Heart right ventricle (tissue), 16 donors: ENCODE measurements at regions of chr2 and their contacts with region 1.

Region 1: GRCh38 chr2:120312861-120313694 is 32.9 kb upstream of the INHBB start:
- DNase-seq: peak; percentile 81 to 86
- ATAC-seq: peak; percentile 68 to 92 (median 86)
- H3K4me3 ChIP-seq: peak overlapping the region; percentile 4 to 55 (median 46)
- H3K27ac ChIP-seq: peak overlapping the region in 3 of 10 donors; percentile 0 to 34 (median 25)
- H3K4me1 ChIP-seq: peaks cover 0 to 29% (median 17%) of the 10 kb centered on the region in 9 donors
- H3K27me3 ChIP-seq: no peaks in the 10 kb centered on the region
- CTCF ChIP-seq: peak; percentile 76 to 96 (median 89)

Region 2: DNA sequence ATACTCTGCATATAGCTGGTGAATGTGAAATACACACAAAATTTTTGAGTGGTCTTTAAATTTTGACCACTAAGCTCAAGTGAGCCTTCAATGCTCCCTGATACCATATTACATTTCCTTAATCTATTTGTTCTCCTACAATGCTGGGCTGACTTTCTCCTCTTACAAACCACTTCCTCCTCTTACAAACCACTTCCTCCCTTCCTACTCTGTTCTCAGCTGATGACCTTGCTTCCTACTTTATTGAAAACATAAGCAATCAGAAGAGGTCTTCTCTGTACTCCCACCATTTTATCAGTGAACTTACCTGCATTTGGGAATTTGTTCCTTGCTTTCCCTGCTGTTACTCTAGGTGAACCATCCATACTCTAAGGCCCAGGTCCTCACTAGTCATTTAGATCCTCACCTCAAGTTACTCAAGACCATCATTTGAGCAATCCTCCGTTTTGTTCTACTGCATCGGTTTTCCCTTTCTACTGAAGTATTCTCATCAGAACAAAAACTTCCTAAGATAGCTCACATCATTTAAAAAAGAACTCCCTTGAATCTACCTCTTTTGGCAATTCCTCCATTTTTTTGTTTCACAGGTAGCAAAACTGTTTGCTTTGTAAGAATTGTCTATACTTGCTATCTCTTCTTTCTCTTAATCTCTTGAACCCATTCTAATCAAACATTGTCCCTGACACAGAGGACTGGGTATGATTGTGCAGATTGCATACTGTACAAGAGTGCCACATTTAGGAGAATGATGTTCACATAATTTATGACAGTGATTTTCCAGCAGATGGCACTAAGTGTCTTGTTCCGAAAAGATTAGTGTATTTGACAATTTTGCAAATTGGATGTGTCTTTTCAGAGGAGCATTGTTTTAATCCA is 203.7 kb before region 1 on chr2:
- intact Hi-C with region 1: loop called in 5 of 10 experiments (anchors 5 to 10 kb)
- DNase-seq: peak in 1 of 2 donors; percentile 6
- ATAC-seq: peak in 7 of 8 donors; percentile 15 to 64 (median 51)
- H3K4me3 ChIP-seq: no peak overlapping the region
- H3K27ac ChIP-seq: peak overlapping the region in 1 of 10 donors; percentile 46
- H3K4me1 ChIP-seq: peaks cover 0 to 37% (median 21%) of the 10 kb centered on the region in 9 donors
- H3K27me3 ChIP-seq: peaks cover 0 to 4% (median 0%) of the 10 kb centered on the region in 7 donors
- CTCF ChIP-seq: peak in 8 of 9 donors; percentile 23 to 65 (median 52)

Region 3: GRCh38 chr2:120206022-120206581 is 107.0 kb before region 1 on chr2:
- intact Hi-C with region 1: loop called in 1 of 10 experiments (anchors 10 kb)
- DNase-seq: peak in 1 of 2 donors; percentile 38
- ATAC-seq: no peak
- H3K4me3 ChIP-seq: no peak overlapping the region
- H3K27ac ChIP-seq: no peak overlapping the region
- H3K4me1 ChIP-seq: peaks cover 0 to 25% (median 15%) of the 10 kb centered on the region in 9 donors
- H3K27me3 ChIP-seq: no peaks in the 10 kb centered on the region
- CTCF ChIP-seq: peak in 7 of 9 donors; percentile 29 to 53 (median 42)

Region 4: GRCh38 chr2:120223034-120223912 is 89.8 kb before region 1 on chr2 and contains the start of gene TMEM185B:
- intact Hi-C with region 1: loop called in 3 of 10 experiments (anchors 5 to 10 kb)
- DNase-seq: peak; percentile 91 to 93
- ATAC-seq: peak; percentile 96 to 98 (median 97)
- H3K4me3 ChIP-seq: peak within 1 kb of the TSS; percentile 49 to 92 (median 72)
- H3K27ac ChIP-seq: peak within 1 kb of the TSS; percentile 82 to 99 (median 96)
- H3K4me1 ChIP-seq: peaks cover 5 to 49% (median 35%) of the 10 kb centered on the region in 9 donors
- H3K27me3 ChIP-seq: no peaks in the 10 kb centered on the region
- CTCF ChIP-seq: peak in 5 of 9 donors; percentile 9 to 51 (median 45)
- total RNA-seq, gene TMEM185B: 17.9 to 27.7 (median 23.4) TPM

Region 5: DNA sequence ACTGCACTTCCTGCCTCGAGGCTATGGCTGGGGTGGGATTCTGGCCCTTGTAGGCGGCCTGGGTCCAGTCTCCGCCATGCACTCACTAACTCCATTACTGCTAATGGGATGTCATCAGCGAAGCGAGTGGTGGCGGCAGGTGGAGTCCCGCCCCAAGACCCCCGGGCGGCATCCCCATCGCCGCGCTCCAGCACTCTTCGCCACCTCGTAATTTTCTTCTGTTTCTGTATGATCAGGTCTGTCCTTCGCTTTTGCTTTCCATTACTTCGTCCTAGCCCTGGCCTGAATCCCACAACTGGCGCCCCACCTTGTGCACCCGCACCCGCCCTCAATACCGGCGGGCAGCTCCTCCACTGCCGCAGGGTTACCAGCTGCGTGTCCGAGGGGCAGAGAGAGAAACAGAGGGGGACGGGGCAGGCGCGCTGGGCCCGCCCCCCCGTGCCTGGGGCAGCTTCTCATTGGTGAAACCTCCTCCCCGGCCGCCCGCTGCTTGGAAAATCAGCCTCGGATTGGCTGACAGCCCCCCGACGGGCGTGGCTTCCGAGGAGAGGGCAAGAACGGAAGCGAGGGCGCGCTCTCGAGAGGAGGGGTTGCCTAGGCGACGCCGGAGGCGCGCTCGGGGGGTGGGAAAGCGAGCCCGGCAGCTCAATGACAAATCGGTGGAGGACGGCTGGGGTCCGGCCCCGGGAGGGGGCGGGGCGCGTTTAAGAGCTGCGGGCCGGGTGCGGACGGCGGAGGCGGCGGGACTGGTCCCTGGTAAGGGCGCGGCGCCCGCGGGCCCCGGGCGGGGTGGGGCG is 60.7 kb before region 1 on chr2 and contains the start of gene RALB:
- intact Hi-C with region 1: loop called in 6 of 10 experiments (anchors 2 to 5 kb)
- DNase-seq: peak; percentile 100
- ATAC-seq: peak; percentile 96 to 98 (median 97)
- H3K4me3 ChIP-seq: peak within 1 kb of the TSS; percentile 59 to 95 (median 80)
- H3K27ac ChIP-seq: peak within 1 kb of the TSS; percentile 90 to 98 (median 96)
- H3K4me1 ChIP-seq: peaks cover under 1 to 62% (median 49%) of the 10 kb centered on the region in 9 donors
- H3K27me3 ChIP-seq: peaks cover 0 to 6% (median 0%) of the 10 kb centered on the region in 7 donors
- CTCF ChIP-seq: no peak
- total RNA-seq, gene RALB: 37.0 to 53.8 (median 45.0) TPM

Region 6: DNA sequence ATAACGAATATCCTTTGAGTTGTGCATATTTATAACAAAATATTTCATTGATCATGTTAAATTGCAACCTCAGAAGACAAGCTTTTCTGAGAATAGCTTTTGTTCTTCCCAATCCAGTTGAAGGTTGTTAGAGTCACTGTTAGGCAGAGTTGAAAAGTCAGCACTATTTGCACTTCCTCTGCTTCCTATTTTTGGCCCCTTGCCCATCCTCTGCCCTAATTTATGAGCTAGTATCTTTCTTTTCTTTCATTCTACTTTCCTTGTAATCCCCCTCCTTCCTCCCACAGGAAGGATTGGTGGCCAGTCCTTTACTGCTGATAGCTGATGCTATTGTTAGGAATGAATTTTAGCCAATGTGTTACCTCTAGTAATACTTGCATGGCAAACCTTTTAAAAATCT is 55.6 kb before region 1 on chr2:
- intact Hi-C with region 1: loop called in 6 of 10 experiments (anchors 2 to 5 kb)
- DNase-seq: peak in 1 of 2 donors; percentile 35
- ATAC-seq: no peak
- H3K4me3 ChIP-seq: no peak overlapping the region
- H3K27ac ChIP-seq: peak overlapping the region in 2 of 10 donors; percentile 12 to 41
- H3K4me1 ChIP-seq: peaks cover 0 to 80% (median 74%) of the 10 kb centered on the region in 9 donors
- H3K27me3 ChIP-seq: no peaks in the 10 kb centered on the region
- CTCF ChIP-seq: no peak

Region 7: DNA sequence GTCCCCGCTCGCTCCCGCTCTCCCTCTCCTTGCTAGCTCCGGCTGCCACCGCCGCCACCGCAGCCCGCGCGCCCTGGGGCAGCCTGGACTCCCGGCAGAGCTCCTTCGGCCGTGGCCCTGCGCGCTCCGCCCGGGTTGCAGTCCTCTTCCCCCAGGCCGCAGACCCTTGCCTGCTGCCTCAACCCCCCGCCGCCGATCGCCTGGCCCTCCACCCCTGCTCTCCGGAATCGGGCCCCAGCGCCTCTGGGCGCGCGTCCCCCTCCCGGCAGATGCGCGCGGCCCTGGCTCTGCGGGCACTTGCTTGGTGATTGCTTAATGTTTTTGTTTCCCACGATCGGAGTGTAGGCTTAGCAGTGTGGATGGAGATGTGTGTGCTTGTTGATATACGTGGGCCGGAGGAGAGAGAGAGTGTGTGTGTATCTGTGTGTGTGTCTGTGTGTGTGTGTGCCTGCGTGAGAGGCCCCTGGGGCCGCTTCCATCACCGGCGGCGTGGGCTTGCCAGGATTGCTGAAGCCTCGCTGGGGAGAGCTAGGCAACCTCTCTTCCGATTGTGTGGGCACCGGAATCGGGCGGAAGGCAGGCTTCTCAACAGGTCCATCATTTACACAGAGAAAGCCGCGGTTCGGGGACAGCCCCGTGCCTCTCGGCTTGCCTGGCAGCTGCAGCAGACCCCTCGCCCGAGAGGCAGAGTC is 33.7 kb after region 1 on chr2:
- intact Hi-C with region 1: no loop called
- DNase-seq: no peak
- ATAC-seq: peak in 3 of 8 donors; percentile 5 to 27 (median 7)
- H3K4me3 ChIP-seq: peak overlapping the region in 9 of 10 donors; percentile 26 to 56 (median 47)
- H3K27ac ChIP-seq: peak overlapping the region in 3 of 10 donors; percentile 52 to 54 (median 52)
- H3K4me1 ChIP-seq: peaks cover 13 to 45% (median 36%) of the 10 kb centered on the region in 9 donors
- H3K27me3 ChIP-seq: peaks cover 12 to 81% (median 60%) of the 10 kb centered on the region in 7 donors
- CTCF ChIP-seq: no peak